ENCODE measurements at regions of chr1 and their contacts with region 1.

Region 1: GRCh38 chr1:87328272-87329050 is at the start of gene LMO4:
- DNase-seq: peak; percentile 85
- ATAC-seq: peak; percentile 78
- H3K4me3 Mint-ChIP-seq: peak within 1 kb of the TSS; percentile 95
- H3K27ac Mint-ChIP-seq: peak within 1 kb of the TSS; percentile 97
- H3K4me1 Mint-ChIP-seq: peaks cover 47% of the 10 kb centered on the region
- H3K27me3 Mint-ChIP-seq: no peaks in the 10 kb centered on the region
- CTCF ChIP-seq: no peak
- total RNA-seq, gene LMO4: 31.2 and 37.1 TPM in 2 replicates

Region 2: GRCh38 chr1:86380257-86380861 is 948.1 kb before region 1 on chr1:
- CTCF ChIA-PET with region 1: no interaction called
- POLR2A ChIA-PET with region 1: no interaction called
- intact Hi-C with region 1: loop called (anchors 5 kb)
- DNase-seq: no peak
- ATAC-seq: peak; percentile 75
- H3K4me3 Mint-ChIP-seq: no peak overlapping the region
- H3K27ac Mint-ChIP-seq: no peak overlapping the region
- H3K4me1 Mint-ChIP-seq: peaks cover 8% of the 10 kb centered on the region
- H3K27me3 Mint-ChIP-seq: no peaks in the 10 kb centered on the region
- CTCF ChIP-seq: no peak

Region 3: DNA sequence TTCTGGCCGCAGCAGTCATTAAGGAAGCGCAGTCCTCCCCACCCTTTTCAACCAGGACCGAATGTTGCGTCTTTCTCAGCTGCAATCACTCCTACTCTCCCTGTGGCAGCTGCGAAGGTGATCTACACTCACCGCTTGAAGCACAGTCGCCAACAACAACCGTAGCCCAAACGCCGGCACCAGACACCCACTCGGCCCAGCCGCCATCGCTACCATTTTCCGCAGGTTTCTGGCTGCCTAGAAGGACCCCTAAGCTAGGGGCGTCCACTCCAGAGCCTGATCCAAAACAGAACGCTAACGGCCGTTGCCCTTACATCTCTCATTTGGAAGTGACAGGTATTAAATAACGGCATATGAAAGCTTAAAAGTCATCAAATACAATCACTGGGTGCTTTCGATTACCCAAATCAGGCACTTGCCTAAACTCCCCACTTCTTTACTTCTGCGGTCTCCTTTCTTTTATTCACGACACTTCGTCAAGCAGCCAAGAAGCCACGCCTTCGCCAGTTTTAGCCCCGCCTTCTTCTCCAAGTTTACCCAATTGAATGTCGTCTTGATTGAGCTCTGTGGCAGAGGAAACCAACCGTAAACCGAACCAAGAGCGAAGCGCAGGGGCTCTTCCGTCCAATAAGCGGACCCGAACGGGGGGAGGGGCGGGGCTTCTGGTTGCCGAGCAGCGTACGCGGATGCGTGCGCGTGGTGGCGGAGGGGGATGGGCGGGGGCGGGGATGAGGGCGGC is 414.4 kb before region 1 on chr1 and contains the start of gene SELENOF:
- CTCF ChIA-PET with region 1: no interaction called
- POLR2A ChIA-PET with region 1: interaction called, 12 read pairs
- intact Hi-C with region 1: loop called (anchors 1 kb)
- DNase-seq: peak; percentile 92
- ATAC-seq: peak; percentile 89
- H3K4me3 Mint-ChIP-seq: no peak within 1 kb of the TSS
- H3K27ac Mint-ChIP-seq: no peak within 1 kb of the TSS
- H3K4me1 Mint-ChIP-seq: peaks cover 44% of the 10 kb centered on the region
- H3K27me3 Mint-ChIP-seq: no peaks in the 10 kb centered on the region
- CTCF ChIP-seq: no peak
- total RNA-seq, gene SELENOF: 172 TPM in 2 replicates

Region 4: DNA sequence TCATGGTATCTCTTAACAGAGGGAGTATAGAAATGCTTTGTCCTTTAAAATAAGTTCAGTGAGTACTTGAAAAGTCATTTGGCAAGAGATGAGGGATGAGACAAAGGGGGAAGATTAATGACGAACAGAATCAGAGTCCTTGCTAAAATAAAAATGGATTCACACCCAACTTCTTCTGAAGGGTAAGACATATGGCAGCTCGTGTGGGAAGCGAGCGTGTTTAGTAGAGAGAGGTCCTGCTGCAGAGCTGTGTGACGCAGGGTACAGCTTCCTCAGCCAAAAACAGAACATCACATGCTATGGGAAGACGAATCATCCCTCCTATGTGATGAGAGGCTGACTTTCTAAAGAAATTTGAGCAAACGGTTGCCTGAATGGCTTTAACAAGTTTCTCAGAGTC is 158.3 kb before region 1 on chr1:
- CTCF ChIA-PET with region 1: no interaction called
- POLR2A ChIA-PET with region 1: no interaction called
- intact Hi-C with region 1: no loop called
- DNase-seq: no peak
- ATAC-seq: no peak
- H3K4me3 Mint-ChIP-seq: no peak overlapping the region
- H3K27ac Mint-ChIP-seq: no peak overlapping the region
- H3K4me1 Mint-ChIP-seq: no peaks in the 10 kb centered on the region
- H3K27me3 Mint-ChIP-seq: peaks cover 29% of the 10 kb centered on the region
- CTCF ChIP-seq: no peak

Region 5: DNA sequence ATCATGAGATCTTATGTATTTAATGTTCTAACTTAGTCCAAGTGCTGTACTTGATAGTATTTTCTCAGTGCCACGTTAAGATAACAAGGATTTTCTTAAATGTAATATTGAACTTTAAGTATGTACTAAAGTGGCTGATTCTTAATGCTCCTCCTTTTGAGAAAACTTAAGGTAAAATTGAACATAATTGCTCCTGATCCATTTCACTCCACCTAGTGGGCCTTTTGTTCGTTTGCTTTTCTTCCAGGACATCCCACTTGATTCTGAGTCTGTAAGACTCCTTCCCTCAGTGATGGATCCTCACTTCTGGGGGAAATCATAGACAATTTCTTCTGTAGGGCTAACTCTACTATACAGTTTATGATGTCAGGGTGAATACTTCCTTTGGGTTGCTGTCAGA is 173.3 kb after region 1 on chr1:
- CTCF ChIA-PET with region 1: no interaction called
- POLR2A ChIA-PET with region 1: no interaction called
- intact Hi-C with region 1: loop called (anchors 5 kb)
- DNase-seq: no peak
- ATAC-seq: no peak
- H3K4me3 Mint-ChIP-seq: no peak overlapping the region
- H3K27ac Mint-ChIP-seq: no peak overlapping the region
- H3K4me1 Mint-ChIP-seq: peaks cover 8% of the 10 kb centered on the region
- H3K27me3 Mint-ChIP-seq: no peaks in the 10 kb centered on the region
- CTCF ChIP-seq: no peak

Region 6: DNA sequence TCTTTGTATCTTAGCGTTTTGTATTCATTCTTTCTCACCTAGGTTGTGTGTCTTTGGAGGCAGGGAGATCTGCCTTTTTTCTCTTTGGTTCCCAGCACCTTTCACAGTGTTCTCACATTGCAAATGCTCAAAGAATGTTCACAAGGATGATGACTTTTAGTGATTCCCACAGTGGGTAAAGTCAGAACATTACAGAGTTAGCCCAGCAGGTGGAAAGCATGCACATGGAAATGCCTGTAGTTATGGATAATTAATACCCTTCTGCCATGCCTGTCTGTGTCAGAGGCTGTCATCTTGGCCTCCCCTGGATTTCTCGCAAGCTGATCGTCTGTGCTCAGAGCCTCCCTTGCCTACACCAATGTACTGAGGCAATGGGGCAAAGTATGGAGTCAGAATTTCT is 459.1 kb after region 1 on chr1:
- CTCF ChIA-PET with region 1: no interaction called
- POLR2A ChIA-PET with region 1: no interaction called
- intact Hi-C with region 1: no loop called
- DNase-seq: no peak
- ATAC-seq: no peak
- H3K4me3 Mint-ChIP-seq: no peak overlapping the region
- H3K27ac Mint-ChIP-seq: no peak overlapping the region
- H3K4me1 Mint-ChIP-seq: no peaks in the 10 kb centered on the region
- H3K27me3 Mint-ChIP-seq: no peaks in the 10 kb centered on the region
- CTCF ChIP-seq: no peak

Region 7: DNA sequence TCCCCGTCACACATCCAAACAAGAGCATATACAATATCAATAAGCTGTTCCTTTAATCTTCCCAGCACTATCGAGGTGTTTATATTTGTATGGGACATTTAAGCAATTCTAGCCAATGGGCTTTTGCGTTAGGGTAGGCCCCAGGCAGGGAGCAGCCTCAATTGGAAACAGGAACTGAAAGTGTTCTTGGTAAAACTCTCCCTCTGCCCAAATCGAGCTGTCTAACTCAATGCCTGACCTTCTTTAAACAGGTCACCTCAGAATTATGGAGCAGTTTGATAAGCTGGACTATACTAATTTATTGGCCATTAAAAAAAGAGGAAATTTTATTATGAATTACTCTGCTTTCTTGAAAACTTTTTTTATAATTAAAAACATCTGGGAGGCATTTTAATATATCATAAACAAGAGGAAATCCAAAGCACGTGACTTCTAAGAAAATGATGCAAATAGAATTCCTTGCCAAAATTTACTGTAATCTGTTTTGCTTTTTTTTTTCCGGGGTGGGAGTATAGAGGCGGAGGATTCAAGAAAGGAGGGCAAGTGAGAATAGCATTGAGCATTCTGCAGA is 498.3 kb after region 1 on chr1:
- CTCF ChIA-PET with region 1: no interaction called
- POLR2A ChIA-PET with region 1: interaction called, 5 read pairs
- intact Hi-C with region 1: loop called (anchors 1 kb)
- DNase-seq: no peak
- ATAC-seq: peak; percentile 95
- H3K4me3 Mint-ChIP-seq: peak overlapping the region; percentile 44
- H3K27ac Mint-ChIP-seq: peak overlapping the region; percentile 65
- H3K4me1 Mint-ChIP-seq: peaks cover 43% of the 10 kb centered on the region
- H3K27me3 Mint-ChIP-seq: no peaks in the 10 kb centered on the region
- CTCF ChIP-seq: no peak

Region 8: DNA sequence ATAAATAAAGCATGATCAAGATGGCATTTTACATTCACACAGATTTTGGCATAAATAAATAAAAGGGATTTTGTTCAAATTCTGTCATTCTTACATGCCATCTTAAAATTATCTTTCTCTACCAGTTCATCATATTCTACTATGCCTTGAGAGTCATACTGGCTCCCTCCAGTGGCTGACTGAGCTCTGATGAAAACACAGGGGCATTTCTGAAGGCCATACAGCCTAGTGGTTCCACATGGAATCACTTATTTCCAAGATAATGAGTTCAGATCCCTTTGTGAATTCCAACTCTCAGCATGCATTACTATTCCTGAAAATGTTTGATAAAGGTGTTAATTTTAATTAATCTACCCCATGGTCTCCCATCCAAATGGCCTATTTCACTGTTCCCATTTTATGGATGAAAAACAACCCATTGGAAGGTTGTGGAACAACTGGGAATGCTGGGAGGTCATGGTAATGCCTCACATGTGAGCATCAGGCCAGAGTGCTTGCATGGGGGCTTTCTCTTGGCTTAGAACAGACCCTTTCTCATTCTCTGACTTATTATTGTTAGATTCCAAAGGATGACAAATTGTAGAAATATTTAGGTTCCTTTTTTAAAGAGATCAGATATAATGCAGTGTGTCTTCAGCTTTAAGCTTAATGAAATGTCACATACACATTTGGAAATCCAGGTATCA is 733.2 kb after region 1 on chr1:
- CTCF ChIA-PET with region 1: interaction called, 4 read pairs
- POLR2A ChIA-PET with region 1: no interaction called
- intact Hi-C with region 1: loop called (anchors 1 kb)
- DNase-seq: no peak
- ATAC-seq: peak; percentile 60
- H3K4me3 Mint-ChIP-seq: no peak overlapping the region
- H3K27ac Mint-ChIP-seq: no peak overlapping the region
- H3K4me1 Mint-ChIP-seq: no peaks in the 10 kb centered on the region
- H3K27me3 Mint-ChIP-seq: no peaks in the 10 kb centered on the region
- CTCF ChIP-seq: no peak